Endothelial cell of umbilical vein (primary cell): ENCODE measurements at regions of chr1 and their contacts with region 1.

Region 1: GRCh38 chr1:64877151-64877550 is 89.2 kb downstream of the JAK1 start:
- DNase-seq: no peak
- H3K4me3 ChIP-seq: no peak overlapping the region
- H3K27ac ChIP-seq: peak overlapping the region; percentile 98
- H3K4me1 ChIP-seq: peaks cover 55% of the 10 kb centered on the region
- H3K27me3 ChIP-seq: no peaks in the 10 kb centered on the region
- CTCF ChIP-seq: no peak
- POLR2A ChIP-seq: no peak

Region 2: DNA sequence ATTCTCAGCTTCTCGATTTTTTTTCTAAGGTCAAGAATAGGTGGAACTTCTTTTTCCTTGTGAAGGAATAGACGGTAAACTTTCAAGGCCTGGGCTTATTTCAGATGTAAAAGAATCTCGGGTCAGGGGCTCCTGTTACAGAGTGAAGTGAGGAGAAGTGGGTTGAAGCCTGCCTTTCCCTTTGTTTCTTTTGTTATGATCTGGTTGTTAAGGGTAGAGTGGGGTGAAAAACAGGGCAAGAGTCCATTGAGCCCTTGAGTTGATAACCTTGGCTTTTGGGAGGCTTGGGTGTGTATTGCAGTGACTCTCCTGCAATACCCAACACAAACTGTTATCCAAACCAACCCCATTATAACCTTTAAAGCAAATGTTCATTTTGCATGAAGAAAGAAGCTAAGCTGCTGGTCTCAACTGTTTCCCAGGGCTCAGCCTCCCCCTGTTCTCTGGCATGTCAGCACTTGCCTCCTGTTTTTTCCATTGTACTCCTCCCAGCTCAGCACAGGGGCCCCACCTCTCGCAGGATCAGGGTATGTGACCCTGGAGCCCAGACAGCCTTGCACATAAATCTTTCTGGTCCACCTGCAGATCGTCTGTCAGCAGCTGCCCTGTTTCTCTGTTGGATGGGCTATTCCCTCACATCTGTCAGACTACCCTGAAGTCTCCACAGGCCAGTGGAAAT is 304.8 kb before region 1 on chr1:
- CTCF ChIA-PET with region 1: no interaction called
- POLR2A ChIA-PET with region 1: no interaction called
- dilution Hi-C with region 1: no loop called
- intact Hi-C with region 1: no loop called
- DNase-seq: no peak
- H3K4me3 ChIP-seq: no peak overlapping the region
- H3K27ac ChIP-seq: no peak overlapping the region
- H3K4me1 ChIP-seq: no peaks in the 10 kb centered on the region
- H3K27me3 ChIP-seq: no peaks in the 10 kb centered on the region
- CTCF ChIP-seq: no peak
- POLR2A ChIP-seq: no peak

Region 3: DNA sequence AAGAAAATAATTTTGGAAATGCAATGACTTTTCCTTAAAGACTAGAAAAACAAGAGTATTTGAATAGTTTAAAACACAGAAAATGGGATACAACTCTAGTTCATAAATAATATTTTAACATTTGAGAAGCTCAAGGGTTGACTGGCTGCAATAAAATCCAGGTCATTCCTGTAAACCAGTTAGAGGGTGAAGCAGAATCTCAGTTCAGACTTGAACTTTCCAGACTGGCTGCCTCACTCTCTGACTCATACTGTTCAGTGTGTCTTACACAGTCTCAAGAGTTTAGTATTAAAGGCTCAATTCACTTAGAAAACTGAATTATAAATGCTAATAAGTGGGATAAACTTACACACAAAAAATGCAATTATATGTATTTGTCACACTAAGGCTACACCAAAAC is 42.4 kb before region 1 on chr1:
- CTCF ChIA-PET with region 1: no interaction called
- POLR2A ChIA-PET with region 1: no interaction called
- dilution Hi-C with region 1: no loop called
- intact Hi-C with region 1: loop called (anchors 1 kb)
- DNase-seq: no peak
- H3K4me3 ChIP-seq: no peak overlapping the region
- H3K27ac ChIP-seq: peak overlapping the region; percentile 4
- H3K4me1 ChIP-seq: peaks cover 48% of the 10 kb centered on the region
- H3K27me3 ChIP-seq: no peaks in the 10 kb centered on the region
- CTCF ChIP-seq: no peak
- POLR2A ChIP-seq: no peak

Region 4: GRCh38 chr1:64864018-64864940 is 12.9 kb before region 1 on chr1:
- CTCF ChIA-PET with region 1: interaction called, 7 read pairs
- POLR2A ChIA-PET with region 1: no interaction called
- dilution Hi-C with region 1: no loop called
- intact Hi-C with region 1: loop called (anchors 1 kb)
- DNase-seq: peak; percentile 90
- H3K4me3 ChIP-seq: no peak overlapping the region
- H3K27ac ChIP-seq: peak overlapping the region; percentile 68
- H3K4me1 ChIP-seq: peaks cover 31% of the 10 kb centered on the region
- H3K27me3 ChIP-seq: no peaks in the 10 kb centered on the region
- CTCF ChIP-seq: no peak
- POLR2A ChIP-seq: peak; percentile 52

Region 5: DNA sequence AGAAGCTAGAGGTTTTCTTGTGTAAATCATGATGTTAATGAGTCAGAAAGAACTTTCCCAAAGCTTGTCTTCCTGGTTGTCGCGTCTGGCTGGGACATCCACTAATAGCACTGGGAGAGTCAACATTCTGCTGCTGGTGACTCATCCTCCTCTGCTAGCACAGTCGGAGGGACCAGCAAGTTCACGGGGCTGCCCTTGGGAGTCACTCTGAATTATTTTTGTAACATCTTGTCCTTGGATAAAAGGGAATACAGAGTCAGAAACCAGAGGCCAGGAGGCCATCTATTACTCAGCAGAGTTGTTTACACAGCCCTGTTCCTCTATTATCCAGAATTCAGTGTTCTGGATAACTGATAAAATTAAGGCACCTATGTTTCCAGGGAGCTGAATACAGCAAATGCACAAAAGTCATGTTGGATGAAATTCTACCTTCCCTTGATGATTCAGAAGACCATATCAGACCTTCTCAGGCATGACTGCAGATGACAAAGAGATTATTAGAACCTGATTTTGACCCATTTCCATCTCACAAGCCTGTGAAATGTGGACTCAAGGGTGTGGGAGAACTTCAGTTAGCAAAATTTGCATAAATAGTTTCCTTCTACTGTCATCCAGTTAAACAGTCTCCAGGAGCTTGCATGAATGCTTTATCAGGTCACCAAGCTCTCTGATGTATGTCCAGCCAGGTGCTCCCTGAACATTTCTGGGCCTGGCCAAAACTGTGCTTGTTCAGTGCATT is 21.1 kb after region 1 on chr1:
- CTCF ChIA-PET with region 1: interaction called, 5 read pairs
- POLR2A ChIA-PET with region 1: interaction called, 5 read pairs
- dilution Hi-C with region 1: no loop called
- intact Hi-C with region 1: loop called (anchors 1 kb)
- DNase-seq: peak; percentile 98
- H3K4me3 ChIP-seq: peak overlapping the region in 1 of 3 experiments; percentile 32
- H3K27ac ChIP-seq: peak overlapping the region; percentile 97
- H3K4me1 ChIP-seq: peaks cover 42% of the 10 kb centered on the region
- H3K27me3 ChIP-seq: no peaks in the 10 kb centered on the region
- CTCF ChIP-seq: no peak
- POLR2A ChIP-seq: peak; percentile 55

Region 6: GRCh38 chr1:64917328-64917861 is 40.2 kb after region 1 on chr1:
- CTCF ChIA-PET with region 1: no interaction called
- POLR2A ChIA-PET with region 1: interaction called, 17 read pairs
- dilution Hi-C with region 1: no loop called
- intact Hi-C with region 1: loop called (anchors 1 kb)
- DNase-seq: peak; percentile 91
- H3K4me3 ChIP-seq: peak overlapping the region in 1 of 3 experiments; percentile 6
- H3K27ac ChIP-seq: peak overlapping the region; percentile 86
- H3K4me1 ChIP-seq: peaks cover 54% of the 10 kb centered on the region
- H3K27me3 ChIP-seq: no peaks in the 10 kb centered on the region
- CTCF ChIP-seq: no peak
- POLR2A ChIP-seq: no peak

Region 7: GRCh38 chr1:64923294-64923721 is 46.2 kb after region 1 on chr1:
- CTCF ChIA-PET with region 1: interaction called, 3 read pairs
- POLR2A ChIA-PET with region 1: interaction called, 17 read pairs
- dilution Hi-C with region 1: no loop called
- intact Hi-C with region 1: no loop called
- DNase-seq: no peak
- H3K4me3 ChIP-seq: no peak overlapping the region
- H3K27ac ChIP-seq: no peak overlapping the region
- H3K4me1 ChIP-seq: peaks cover 29% of the 10 kb centered on the region
- H3K27me3 ChIP-seq: no peaks in the 10 kb centered on the region
- CTCF ChIP-seq: no peak
- POLR2A ChIP-seq: no peak

Region 8: DNA sequence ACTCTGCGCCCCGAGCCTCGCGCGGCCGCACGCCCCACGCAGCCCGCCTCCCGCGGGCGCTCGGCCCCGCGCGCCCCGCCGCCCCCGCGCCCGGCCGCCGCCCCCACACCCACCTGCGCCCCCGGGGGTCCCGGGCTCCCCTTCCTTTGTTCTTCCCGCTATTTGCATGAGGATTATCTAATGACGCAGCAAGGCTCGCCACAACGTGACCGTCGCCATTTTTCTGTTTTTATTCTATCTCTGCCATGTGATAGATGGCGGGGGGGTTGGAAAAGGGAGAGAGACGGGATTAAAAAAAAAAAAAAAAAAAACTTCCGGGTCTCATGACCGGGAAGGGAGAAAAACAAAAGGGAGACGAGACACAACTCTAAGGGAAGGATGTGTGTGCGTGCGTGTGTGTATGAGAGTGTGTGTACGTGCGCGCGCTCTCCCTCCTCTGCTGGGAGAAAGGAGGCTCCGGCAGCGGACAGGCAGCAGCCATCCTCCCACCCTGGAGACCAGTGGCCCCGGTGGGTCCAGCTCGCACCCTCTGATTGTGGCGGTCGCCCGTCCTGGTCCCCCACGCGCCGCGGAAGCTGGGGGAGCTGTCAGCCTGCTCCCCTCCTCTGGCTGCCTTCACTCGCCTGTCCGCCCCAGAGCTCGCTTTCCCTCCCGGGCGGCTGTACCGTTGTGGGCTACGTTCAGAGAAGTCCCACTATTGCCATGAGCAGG is 190.5 kb after region 1 on chr1:
- CTCF ChIA-PET with region 1: no interaction called
- POLR2A ChIA-PET with region 1: no interaction called
- dilution Hi-C with region 1: no loop called
- intact Hi-C with region 1: loop called (anchors 5 kb)
- DNase-seq: peak; percentile 84
- H3K4me3 ChIP-seq: peak overlapping the region; percentile 48 to 88 (median 85)
- H3K27ac ChIP-seq: peak overlapping the region; percentile 82
- H3K4me1 ChIP-seq: peaks cover 14% of the 10 kb centered on the region
- H3K27me3 ChIP-seq: no peaks in the 10 kb centered on the region
- CTCF ChIP-seq: no peak
- POLR2A ChIP-seq: no peak

Region 9: DNA sequence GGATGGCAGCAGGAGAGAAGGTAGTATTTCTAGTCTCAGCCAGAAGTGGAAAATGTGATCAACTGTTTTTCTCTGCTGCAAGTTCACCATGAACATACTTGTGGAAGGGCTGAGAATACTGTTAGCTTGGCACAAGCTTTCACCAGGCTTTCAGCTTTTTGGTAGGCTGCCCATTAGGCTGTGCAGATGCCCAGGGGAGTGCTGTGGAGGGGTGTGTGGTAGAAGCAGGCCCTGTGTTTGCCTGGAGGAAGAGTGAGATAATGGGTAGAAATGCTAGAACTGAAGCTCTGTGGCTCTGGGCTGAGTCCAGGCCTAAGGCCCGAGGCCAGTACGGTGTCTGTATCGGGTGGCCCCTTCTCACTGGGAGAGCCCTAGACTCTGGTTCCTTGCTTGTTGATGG is 442.0 kb after region 1 on chr1:
- CTCF ChIA-PET with region 1: no interaction called
- POLR2A ChIA-PET with region 1: no interaction called
- dilution Hi-C with region 1: no loop called
- intact Hi-C with region 1: no loop called
- DNase-seq: no peak
- H3K4me3 ChIP-seq: no peak overlapping the region
- H3K27ac ChIP-seq: no peak overlapping the region
- H3K4me1 ChIP-seq: no peaks in the 10 kb centered on the region
- H3K27me3 ChIP-seq: no peaks in the 10 kb centered on the region
- CTCF ChIP-seq: no peak
- POLR2A ChIP-seq: no peak